ENCODE measurements at regions of chrX and their contacts with region 1.

Region 1: DNA sequence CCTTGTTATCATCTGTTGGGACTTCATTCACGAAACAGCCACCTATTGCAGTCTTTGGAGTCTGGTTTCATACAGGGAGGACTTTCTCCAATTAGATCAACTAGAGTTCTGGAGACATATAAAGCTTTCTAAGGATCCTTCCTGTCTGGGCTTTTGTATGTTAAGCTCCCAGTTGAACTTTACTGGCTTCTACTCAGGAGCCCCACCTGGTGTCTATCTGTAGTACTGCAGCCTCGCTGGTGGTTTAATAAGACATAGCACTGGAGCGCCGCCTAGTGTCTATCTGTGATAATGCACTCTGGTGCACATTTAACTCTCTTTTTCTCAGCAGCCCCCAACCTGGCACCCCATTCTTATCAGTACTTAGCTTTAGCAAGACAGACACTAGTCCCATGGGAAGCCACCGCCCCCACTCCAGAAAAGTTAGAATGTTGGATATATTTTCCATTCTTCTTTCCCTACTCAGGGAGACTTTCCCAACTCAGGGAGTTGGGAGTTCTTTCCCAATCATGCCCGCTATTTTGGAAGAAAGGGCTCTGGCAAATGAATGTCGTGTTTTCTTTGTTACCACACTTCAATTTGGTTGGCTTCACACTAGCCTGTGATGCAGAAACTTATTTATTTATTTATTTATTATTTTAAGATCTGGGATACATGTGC is 36.9 kb upstream of the SYTL4 start:
- DNase-seq: peak; percentile 44
- ATAC-seq: peak; percentile 72
- H3K4me3 ChIP-seq: no peak overlapping the region
- H3K27ac ChIP-seq: no peak overlapping the region
- H3K4me1 ChIP-seq: no peaks in the 10 kb centered on the region
- H3K27me3 ChIP-seq: no peaks in the 10 kb centered on the region; the same call in 1 of the 2 replicates
- CTCF ChIP-seq: peak; percentile 93 to 99 (median 95)
- POLR2A ChIP-seq: no peak
- RAD21 ChIP-seq: peak; percentile 94

Region 2: DNA sequence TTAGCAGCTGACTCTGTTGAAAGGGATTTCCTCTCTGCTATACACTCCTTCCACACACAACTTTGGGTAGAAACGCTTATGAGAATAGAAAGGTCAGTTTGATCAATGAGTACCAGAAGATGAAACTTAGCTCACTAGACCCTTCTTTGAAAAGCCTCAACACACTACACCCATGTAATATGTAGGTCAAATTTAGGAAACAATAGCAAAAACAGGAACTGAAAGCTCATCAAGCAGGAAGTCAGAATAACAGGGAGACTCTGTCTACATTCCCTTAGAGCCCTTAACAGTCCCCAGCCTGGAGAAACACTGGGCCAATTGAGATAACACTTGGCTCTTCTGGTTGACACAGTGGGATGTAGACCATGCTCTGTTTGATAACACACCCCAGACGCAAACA is 94.1 kb before region 1 on chrX:
- CTCF ChIA-PET with region 1: interaction called, 34 read pairs
- POLR2A ChIA-PET with region 1: no interaction called
- RAD21 ChIA-PET with region 1: interaction called, 4 to 6 read pairs
- intact Hi-C with region 1: no loop called
- DNase-seq: no peak
- ATAC-seq: no peak
- H3K4me3 ChIP-seq: no peak overlapping the region
- H3K27ac ChIP-seq: no peak overlapping the region
- H3K4me1 ChIP-seq: peaks cover 0 to 31% of the 10 kb centered on the region in 2 experiments; a peak in 3 of 4 replicates
- H3K27me3 ChIP-seq: no peaks in the 10 kb centered on the region
- CTCF ChIP-seq: no peak
- POLR2A ChIP-seq: no peak
- RAD21 ChIP-seq: no peak

Region 3: DNA sequence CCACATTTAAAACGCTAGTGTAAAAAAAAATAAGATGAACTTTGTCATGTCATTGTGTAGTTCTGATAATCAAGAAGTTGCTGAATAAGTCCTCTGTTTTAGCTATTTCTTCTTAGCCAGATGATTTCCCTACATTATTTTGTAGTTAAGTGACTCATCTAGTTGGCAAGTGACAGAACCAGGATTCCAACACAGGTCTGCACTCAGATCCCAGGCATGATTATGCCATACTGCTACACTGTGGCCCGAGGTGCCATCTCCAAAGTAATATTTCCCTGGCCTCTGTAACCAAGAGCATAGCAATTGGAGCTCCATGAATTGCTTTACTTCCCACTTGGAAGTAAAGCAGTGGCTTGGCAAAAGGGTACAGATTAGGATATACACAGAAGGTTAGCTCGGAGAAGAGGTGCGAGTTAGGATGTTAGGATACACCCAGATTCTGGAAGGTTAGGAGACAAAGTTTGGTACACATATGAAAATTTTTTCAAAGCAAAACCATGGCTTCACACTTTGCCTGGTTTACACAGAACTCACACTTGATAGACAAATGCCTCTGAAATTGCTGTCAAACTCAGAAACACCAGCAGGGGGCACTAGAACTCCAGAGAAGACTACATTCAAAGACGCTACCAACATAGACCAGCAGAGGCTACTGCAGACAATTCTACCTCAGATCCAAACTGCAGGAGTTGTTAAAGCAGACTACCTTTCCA is 83.4 kb before region 1 on chrX:
- CTCF ChIA-PET with region 1: interaction called, 43 read pairs
- POLR2A ChIA-PET with region 1: no interaction called
- RAD21 ChIA-PET with region 1: interaction called, 4 read pairs
- intact Hi-C with region 1: loop called (anchors 1 kb)
- DNase-seq: peak; percentile 56
- ATAC-seq: peak; percentile 84
- H3K4me3 ChIP-seq: no peak overlapping the region
- H3K27ac ChIP-seq: no peak overlapping the region
- H3K4me1 ChIP-seq: no peaks in the 10 kb centered on the region
- H3K27me3 ChIP-seq: no peaks in the 10 kb centered on the region
- CTCF ChIP-seq: peak; percentile 72 to 98 (median 76)
- POLR2A ChIP-seq: no peak
- RAD21 ChIP-seq: peak; percentile 81

Region 4: GRCh38 chrX:100731441-100732281 is 37.1 kb before region 1 on chrX and contains the start of gene SYTL4:
- CTCF ChIA-PET with region 1: interaction called, 12 read pairs
- POLR2A ChIA-PET with region 1: no interaction called
- RAD21 ChIA-PET with region 1: no interaction called
- intact Hi-C with region 1: no loop called
- DNase-seq: peak; percentile 7
- ATAC-seq: peak; percentile 93
- H3K4me3 ChIP-seq: peak within 1 kb of the TSS; percentile 66 to 70
- H3K27ac ChIP-seq: peak within 1 kb of the TSS; percentile 45; the same call in 1 of the 2 replicates
- H3K4me1 ChIP-seq: peaks cover 0 to 7% of the 10 kb centered on the region in 2 experiments; a peak in 2 of 4 replicates
- H3K27me3 ChIP-seq: no peaks in the 10 kb centered on the region
- CTCF ChIP-seq: no peak
- POLR2A ChIP-seq: no peak
- RAD21 ChIP-seq: no peak
- total RNA-seq, gene SYTL4: 8.8 TPM

Region 5: DNA sequence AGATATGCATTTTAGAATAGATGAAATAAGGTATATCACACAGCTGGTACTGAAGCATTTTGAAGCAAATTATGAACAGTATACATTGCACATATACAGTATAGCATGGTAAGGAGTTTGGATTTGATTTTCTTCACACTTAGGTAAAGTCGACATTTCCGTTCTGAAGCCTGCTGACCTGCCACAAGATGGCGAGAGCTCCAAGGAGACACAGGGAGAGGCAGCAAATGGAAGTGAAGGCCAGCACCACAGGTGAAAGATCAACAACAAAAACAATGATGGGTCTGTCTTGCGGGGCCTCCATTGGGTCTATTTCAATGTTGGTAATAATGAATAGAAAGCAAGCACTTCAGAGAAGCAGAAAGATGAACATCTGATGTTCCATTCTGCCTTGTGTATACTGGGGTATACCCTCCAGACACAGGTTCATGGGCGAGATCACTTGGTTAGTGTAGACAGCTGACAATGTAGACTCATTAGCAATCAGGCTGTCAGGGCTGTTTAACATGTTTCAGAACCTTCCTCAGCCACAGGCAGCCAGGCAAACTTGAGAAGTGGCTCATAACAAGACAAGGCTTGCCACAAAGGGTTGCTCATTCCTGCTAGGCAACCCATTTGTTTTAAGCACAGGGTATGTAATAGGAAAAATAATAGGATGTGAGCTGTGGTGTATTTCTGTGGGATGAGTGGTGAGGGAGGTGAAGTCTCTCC is 126.7 kb after region 1 on chrX:
- CTCF ChIA-PET with region 1: no interaction called
- POLR2A ChIA-PET with region 1: no interaction called
- RAD21 ChIA-PET with region 1: no interaction called
- intact Hi-C with region 1: no loop called
- DNase-seq: peak; percentile 26
- ATAC-seq: peak; percentile 86
- H3K4me3 ChIP-seq: no peak overlapping the region
- H3K27ac ChIP-seq: no peak overlapping the region
- H3K4me1 ChIP-seq: no peaks in the 10 kb centered on the region
- H3K27me3 ChIP-seq: no peaks in the 10 kb centered on the region
- CTCF ChIP-seq: peak; percentile 50 to 62 (median 53)
- POLR2A ChIP-seq: no peak
- RAD21 ChIP-seq: peak; percentile 85

Region 6: GRCh38 chrX:101787934-101788333 is 1019.1 kb after region 1 on chrX:
- CTCF ChIA-PET with region 1: no interaction called
- POLR2A ChIA-PET with region 1: no interaction called
- RAD21 ChIA-PET with region 1: no interaction called
- intact Hi-C with region 1: no loop called
- DNase-seq: no peak
- ATAC-seq: no peak
- H3K4me3 ChIP-seq: no peak overlapping the region
- H3K27ac ChIP-seq: no peak overlapping the region
- H3K4me1 ChIP-seq: no peaks in the 10 kb centered on the region
- H3K27me3 ChIP-seq: no peaks in the 10 kb centered on the region
- CTCF ChIP-seq: no peak
- POLR2A ChIP-seq: no peak
- RAD21 ChIP-seq: no peak

Region 7: DNA sequence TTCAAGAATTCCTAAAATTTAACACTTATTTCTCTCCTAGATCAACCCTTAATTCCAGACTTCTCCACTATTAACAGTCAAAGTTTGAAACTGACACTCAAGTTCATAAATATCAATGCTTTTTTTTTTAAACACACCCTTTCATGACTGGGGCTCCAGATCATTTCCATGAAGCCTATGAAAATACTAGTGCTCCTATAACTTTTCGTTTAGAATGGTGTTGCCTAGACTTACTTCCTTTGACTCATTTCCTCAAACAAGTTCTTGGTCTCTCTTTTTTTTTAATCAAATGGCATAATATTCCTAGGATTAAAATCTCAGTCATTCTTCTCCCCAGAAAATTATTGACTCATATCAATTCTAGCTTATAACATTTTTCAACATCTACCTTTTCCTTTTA is 1149.9 kb after region 1 on chrX:
- CTCF ChIA-PET with region 1: no interaction called
- POLR2A ChIA-PET with region 1: no interaction called
- RAD21 ChIA-PET with region 1: no interaction called
- intact Hi-C with region 1: no loop called
- DNase-seq: no peak
- ATAC-seq: no peak
- H3K4me3 ChIP-seq: no peak overlapping the region
- H3K27ac ChIP-seq: no peak overlapping the region
- H3K4me1 ChIP-seq: no peaks in the 10 kb centered on the region
- H3K27me3 ChIP-seq: no peaks in the 10 kb centered on the region; the same call in 1 of the 2 replicates
- CTCF ChIP-seq: no peak
- POLR2A ChIP-seq: no peak
- RAD21 ChIP-seq: no peak

Measured in HCT116 (cell line).